ENCODE measurements at regions of chr2 and their contacts with region 1.

Region 1: GRCh38 chr2:230614913-230615332 is 97.7 kb upstream of the CAB39 start:
- DNase-seq: peak in 1 of 4 experiments; percentile 20
- ATAC-seq: peak; percentile 43
- H3K4me3 ChIP-seq: no peak overlapping the region
- H3K27ac ChIP-seq: no peak overlapping the region
- H3K4me1 ChIP-seq: no peaks in the 10 kb centered on the region; a peak in 1 of 5 replicates
- H3K27me3 ChIP-seq: no peaks in the 10 kb centered on the region
- CTCF ChIP-seq: no peak
- EP300 ChIP-seq: no peak
- POLR2A ChIP-seq: no peak
- RAD21 ChIP-seq: no peak

Region 2: GRCh38 chr2:229780856-229781773 is 833.8 kb before region 1 on chr2:
- CTCF ChIA-PET with region 1: interaction called, 3 read pairs
- POLR2A ChIA-PET with region 1: no interaction called
- in situ Hi-C with region 1: no loop called
- intact Hi-C with region 1: loop called (anchors 10 kb)
- DNase-seq: peak; percentile 24 to 41 (median 28)
- ATAC-seq: peak; percentile 89
- H3K4me3 ChIP-seq: no peak overlapping the region
- H3K27ac ChIP-seq: peak overlapping the region; percentile 17; the same call in 1 of the 3 replicates
- H3K4me1 ChIP-seq: peaks cover 0 to 10% of the 10 kb centered on the region in 2 experiments; a peak in 2 of 5 replicates
- H3K27me3 ChIP-seq: no peaks in the 10 kb centered on the region
- CTCF ChIP-seq: peak; percentile 28 to 65 (median 57); a peak in 5 of 6 replicates
- EP300 ChIP-seq: no peak
- POLR2A ChIP-seq: no peak
- RAD21 ChIP-seq: peak in 1 of 2 experiments; percentile 47; a peak in 2 of 4 replicates

Region 3: DNA sequence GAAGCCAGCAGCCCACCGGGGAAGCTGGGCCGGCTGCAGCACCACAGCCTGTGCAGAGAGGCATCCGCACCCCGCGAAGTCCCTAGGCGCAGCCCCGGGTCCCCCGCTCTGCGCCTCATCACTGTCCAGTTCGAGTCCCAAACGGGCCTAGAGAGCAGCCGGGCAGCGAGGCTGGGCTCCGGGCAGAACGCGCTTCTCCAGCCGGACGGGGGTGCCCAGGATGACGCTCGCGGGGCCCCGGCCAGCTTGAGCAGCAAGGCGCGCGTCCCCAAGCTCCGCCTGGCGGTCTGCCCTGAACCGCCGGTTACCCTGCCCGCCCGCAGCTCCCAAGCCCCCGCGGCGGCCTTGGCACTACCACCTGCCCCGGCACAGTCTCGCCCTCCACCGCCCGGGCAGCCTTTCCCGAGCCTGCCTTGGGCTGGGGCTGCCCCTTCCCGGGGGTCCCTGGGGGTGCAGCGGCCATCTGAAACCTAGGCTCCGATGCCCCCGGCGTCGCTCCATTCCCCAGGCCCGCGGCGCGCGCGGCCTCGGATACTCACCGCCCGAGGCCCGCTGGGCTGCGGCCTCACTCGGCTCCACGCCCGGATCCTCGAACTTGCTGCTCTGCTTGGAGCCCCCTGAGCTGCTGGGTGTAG is 546.8 kb before region 1 on chr2:
- CTCF ChIA-PET with region 1: no interaction called
- POLR2A ChIA-PET with region 1: no interaction called
- in situ Hi-C with region 1: no loop called
- intact Hi-C with region 1: loop called (anchors 1 kb)
- DNase-seq: no peak
- ATAC-seq: no peak
- H3K4me3 ChIP-seq: no peak overlapping the region
- H3K27ac ChIP-seq: no peak overlapping the region
- H3K4me1 ChIP-seq: peaks cover 0 to 11% of the 10 kb centered on the region in 2 experiments; a peak in 3 of 5 replicates
- H3K27me3 ChIP-seq: peaks cover 0 to 35% of the 10 kb centered on the region in 2 experiments; a peak in 2 of 5 replicates
- CTCF ChIP-seq: no peak
- EP300 ChIP-seq: no peak
- POLR2A ChIP-seq: no peak
- RAD21 ChIP-seq: no peak

Region 4: GRCh38 chr2:230160112-230160660 is 454.7 kb before region 1 on chr2:
- CTCF ChIA-PET with region 1: no interaction called
- POLR2A ChIA-PET with region 1: no interaction called
- in situ Hi-C with region 1: no loop called
- intact Hi-C with region 1: loop called (anchors 5 kb)
- DNase-seq: peak; percentile 37 to 53 (median 52)
- ATAC-seq: peak; percentile 75
- H3K4me3 ChIP-seq: no peak overlapping the region
- H3K27ac ChIP-seq: no peak overlapping the region
- H3K4me1 ChIP-seq: peaks cover 0 to 2% of the 10 kb centered on the region in 2 experiments; a peak in 2 of 5 replicates
- H3K27me3 ChIP-seq: no peaks in the 10 kb centered on the region
- CTCF ChIP-seq: peak; percentile 55 to 69 (median 62)
- EP300 ChIP-seq: no peak
- POLR2A ChIP-seq: no peak
- RAD21 ChIP-seq: peak; percentile 24 to 55; a peak in 2 of 4 replicates

Region 5: DNA sequence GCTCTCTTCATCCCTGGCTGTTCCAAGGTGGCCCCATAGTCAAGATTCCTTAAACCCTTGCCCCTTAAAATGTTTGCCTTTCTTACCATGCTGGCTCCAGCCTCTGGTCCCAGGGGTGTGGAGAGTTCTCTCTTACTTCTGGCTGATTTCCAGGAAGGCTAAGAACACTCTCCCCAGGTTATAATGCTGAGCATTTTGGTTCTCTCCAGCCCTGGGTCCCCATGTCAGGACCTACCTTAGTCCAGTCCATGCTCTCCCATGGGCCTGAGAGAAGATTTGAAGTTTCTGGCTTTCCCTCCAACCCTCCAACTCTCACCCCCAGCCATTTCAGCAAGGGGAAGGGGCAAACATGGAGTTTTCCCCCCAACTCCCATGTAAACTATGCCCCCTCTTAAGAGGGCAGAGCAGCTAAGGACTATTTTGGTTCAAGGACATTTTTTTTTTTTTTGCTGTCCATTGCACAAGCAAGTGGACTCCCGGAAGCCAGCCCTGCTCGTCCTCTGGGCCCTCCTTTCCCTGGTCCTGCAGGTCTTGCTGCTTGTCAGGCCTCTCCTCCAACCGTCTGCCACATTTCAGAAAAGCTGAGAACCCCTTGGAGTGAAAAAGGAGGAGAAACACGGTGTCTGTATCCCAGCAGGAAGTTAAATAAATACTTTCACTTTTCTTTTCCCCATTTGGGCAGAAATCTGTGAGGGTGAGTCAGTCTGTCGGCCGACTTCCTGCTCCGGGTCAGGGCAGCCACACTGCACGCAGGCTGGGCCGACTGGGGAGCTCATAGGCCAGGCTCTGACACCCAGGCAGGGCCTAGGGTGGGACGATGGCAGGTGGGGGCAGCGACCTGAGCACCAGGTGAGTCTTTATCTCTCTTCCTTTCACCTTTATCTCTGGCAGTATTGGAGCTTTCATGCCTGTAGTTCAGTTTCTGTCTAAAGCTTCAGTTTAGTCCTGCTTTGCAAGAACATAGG is 288.2 kb before region 1 on chr2 and contains the start of gene SP140L:
- CTCF ChIA-PET with region 1: interaction called, 4 read pairs
- POLR2A ChIA-PET with region 1: no interaction called
- in situ Hi-C with region 1: no loop called
- intact Hi-C with region 1: loop called (anchors 10 kb)
- DNase-seq: peak; percentile 18 to 68 (median 37)
- ATAC-seq: peak; percentile 86
- H3K4me3 ChIP-seq: peak within 1 kb of the TSS; percentile 34
- H3K27ac ChIP-seq: peak within 1 kb of the TSS; percentile 69
- H3K4me1 ChIP-seq: peaks cover 12 to 16% of the 10 kb centered on the region in 2 experiments; a peak in 4 of 5 replicates
- H3K27me3 ChIP-seq: no peaks in the 10 kb centered on the region
- CTCF ChIP-seq: no peak
- EP300 ChIP-seq: 0 out of 2 replicates have a peak, but pooled peaks have one; percentile 24
- POLR2A ChIP-seq: peak; percentile 65
- RAD21 ChIP-seq: no peak
- polyA plus RNA-seq, gene SP140L: 4.0 to 7.1 TPM

Region 6: GRCh38 chr2:230712443-230713330 is 97.8 kb after region 1 on chr2 and contains the start of gene CAB39:
- CTCF ChIA-PET with region 1: no interaction called
- POLR2A ChIA-PET with region 1: no interaction called
- in situ Hi-C with region 1: no loop called
- intact Hi-C with region 1: loop called (anchors 5 kb)
- DNase-seq: peak; percentile 84 to 91 (median 86)
- ATAC-seq: peak; percentile 86
- H3K4me3 ChIP-seq: peak within 1 kb of the TSS; percentile 84
- H3K27ac ChIP-seq: peak within 1 kb of the TSS; percentile 95
- H3K4me1 ChIP-seq: peaks cover 18 to 21% of the 10 kb centered on the region in 2 experiments; a peak in 4 of 5 replicates
- H3K27me3 ChIP-seq: no peaks in the 10 kb centered on the region
- CTCF ChIP-seq: peak; percentile 66 to 89 (median 79)
- EP300 ChIP-seq: no peak; the same call in 1 of the 2 replicates
- POLR2A ChIP-seq: peak; percentile 21; the same call in 1 of the 2 replicates
- RAD21 ChIP-seq: peak in 1 of 2 experiments; percentile 50; a peak in 2 of 4 replicates
- polyA plus RNA-seq, gene CAB39: 27.2 to 37.4 TPM

Region 7: DNA sequence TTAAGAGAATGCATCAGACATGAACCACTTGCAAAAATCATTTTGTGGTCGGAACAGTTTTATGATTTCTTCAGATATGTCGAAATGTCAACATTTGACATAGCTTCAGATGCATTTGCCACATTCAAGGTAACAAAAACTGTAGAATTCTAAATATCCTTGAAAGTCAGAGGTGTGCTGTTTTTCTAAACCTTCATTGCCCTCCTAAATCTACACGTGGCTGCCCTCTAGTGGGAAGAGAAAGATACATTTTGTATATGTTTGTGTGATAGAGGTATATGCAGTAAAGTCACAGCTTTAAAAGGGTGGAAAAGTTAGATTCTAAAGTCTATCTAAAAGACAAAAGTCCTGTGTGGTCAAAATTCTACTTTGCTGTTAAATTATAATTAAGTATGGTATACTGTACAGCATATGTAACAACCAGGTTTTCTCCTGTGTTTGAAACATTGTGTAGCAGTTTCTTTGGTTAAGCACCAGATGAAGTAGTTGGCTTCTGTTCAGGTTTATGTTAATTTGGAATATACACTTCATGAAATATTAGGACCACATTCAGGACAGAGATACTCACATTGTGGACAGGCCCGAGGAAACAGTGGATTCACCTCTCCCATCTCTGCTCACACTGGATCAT is 184.0 kb after region 1 on chr2:
- CTCF ChIA-PET with region 1: no interaction called
- POLR2A ChIA-PET with region 1: no interaction called
- in situ Hi-C with region 1: no loop called
- intact Hi-C with region 1: loop called (anchors 5 kb)
- DNase-seq: peak; percentile 22 to 50 (median 28)
- ATAC-seq: peak; percentile 83
- H3K4me3 ChIP-seq: no peak overlapping the region
- H3K27ac ChIP-seq: no peak overlapping the region
- H3K4me1 ChIP-seq: peaks cover 4 to 13% of the 10 kb centered on the region in 2 experiments; a peak in 3 of 5 replicates
- H3K27me3 ChIP-seq: no peaks in the 10 kb centered on the region
- CTCF ChIP-seq: peak; percentile 35 to 58 (median 46); a peak in 5 of 6 replicates
- EP300 ChIP-seq: no peak
- POLR2A ChIP-seq: no peak
- RAD21 ChIP-seq: peak; percentile 52 to 72

Measured in K562 (cell line).